ENCODE measurements at regions of chr13 and their contacts with region 1.

Region 1: GRCh38 chr13:113863436-113864272 is at the start of gene GAS6:
- DNase-seq: peak; percentile 77 to 87 (median 79)
- ATAC-seq: peak in 3 of 4 donors; percentile 48 to 71 (median 69)
- H3K4me3 ChIP-seq: peak within 1 kb of the TSS; percentile 76 to 97 (median 86)
- H3K27ac ChIP-seq: peak within 1 kb of the TSS; percentile 88 to 98 (median 94)
- H3K4me1 ChIP-seq: peaks cover 0 to 49% (median 36%) of the 10 kb centered on the region in 12 donors
- H3K27me3 ChIP-seq: peaks cover 0 to 6% (median 0%) of the 10 kb centered on the region in 9 donors
- CTCF ChIP-seq: peak in 7 of 12 donors; percentile 7 to 29 (median 21)
- POLR2A ChIP-seq: peak in 1 of 2 donors; percentile 48
- total RNA-seq, gene GAS6: 125 to 438 (median 183) TPM

Region 2: DNA sequence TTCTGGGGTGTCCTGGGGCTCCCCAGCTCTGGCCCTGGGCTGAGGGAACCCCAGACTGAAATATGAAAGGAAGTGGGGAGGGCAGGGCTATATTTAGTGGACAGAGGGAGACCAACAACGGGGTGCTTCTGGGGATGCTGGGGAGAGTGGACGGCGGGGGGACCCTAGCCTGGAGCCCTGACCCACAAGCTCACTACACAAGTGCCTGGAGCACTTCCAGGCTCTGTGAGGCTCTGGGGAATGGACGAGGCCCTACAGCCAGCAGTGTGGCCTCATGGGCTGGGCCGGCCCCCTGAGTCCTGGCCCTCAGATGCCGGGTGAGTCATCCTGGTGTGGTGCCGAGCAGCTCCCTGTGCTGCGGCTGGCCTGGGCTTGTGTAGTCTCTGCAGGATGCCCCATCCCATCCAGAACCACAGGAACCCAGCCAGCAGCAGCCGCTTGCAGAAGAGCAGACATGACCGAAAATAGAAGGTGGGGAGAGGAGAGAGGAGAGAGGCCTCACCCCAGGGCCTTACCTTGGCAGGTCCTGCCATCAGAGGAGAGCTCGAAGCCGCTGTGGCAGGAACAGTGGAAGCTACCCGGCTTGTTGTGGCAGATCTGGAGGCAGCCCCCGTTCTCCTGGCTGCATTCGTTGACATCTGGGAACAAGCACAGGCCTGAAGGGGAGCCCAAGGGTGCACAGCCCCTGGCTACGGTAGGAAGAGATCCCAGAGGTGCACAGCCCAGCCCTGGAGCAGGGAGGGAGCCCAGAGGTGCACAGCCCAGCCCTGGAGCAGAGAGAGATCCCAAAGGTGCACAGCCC is 25.9 kb before region 1 on chr13:
- intact Hi-C with region 1: loop called in 2 of 10 experiments (anchors 2 kb)
- DNase-seq: peak; percentile 92 to 98 (median 95)
- ATAC-seq: peak; percentile 95 to 97 (median 96)
- H3K4me3 ChIP-seq: peak overlapping the region in 8 of 12 donors; percentile 5 to 43 (median 21)
- H3K27ac ChIP-seq: peak overlapping the region; percentile 8 to 97 (median 86)
- H3K4me1 ChIP-seq: peaks cover 24 to 60% (median 46%) of the 10 kb centered on the region in 12 donors
- H3K27me3 ChIP-seq: no peaks in the 10 kb centered on the region
- CTCF ChIP-seq: no peak
- POLR2A ChIP-seq: no peak

Region 3: GRCh38 chr13:113845723-113846635 is 17.7 kb before region 1 on chr13:
- intact Hi-C with region 1: loop called in 1 of 10 experiments (anchors 2 kb)
- DNase-seq: peak in 2 of 5 donors; percentile 28 to 29
- ATAC-seq: no peak
- H3K4me3 ChIP-seq: no peak overlapping the region
- H3K27ac ChIP-seq: peak overlapping the region in 1 of 12 donors; percentile 49
- H3K4me1 ChIP-seq: peaks cover 3 to 97% (median 61%) of the 10 kb centered on the region in 12 donors
- H3K27me3 ChIP-seq: no peaks in the 10 kb centered on the region
- CTCF ChIP-seq: no peak
- POLR2A ChIP-seq: no peak

Region 4: GRCh38 chr13:113881614-113882266 is 18.1 kb after region 1 on chr13:
- intact Hi-C with region 1: loop called in 1 of 10 experiments (anchors 2 kb)
- DNase-seq: peak in 2 of 5 donors; percentile 48 to 59
- ATAC-seq: peak; percentile 10 to 65 (median 45)
- H3K4me3 ChIP-seq: no peak overlapping the region
- H3K27ac ChIP-seq: peak overlapping the region; percentile 56 to 93 (median 82)
- H3K4me1 ChIP-seq: peaks cover 3 to 60% (median 42%) of the 10 kb centered on the region in 12 donors
- H3K27me3 ChIP-seq: no peaks in the 10 kb centered on the region
- CTCF ChIP-seq: no peak
- POLR2A ChIP-seq: no peak

Region 5: GRCh38 chr13:113947321-113948033 is 83.8 kb after region 1 on chr13:
- intact Hi-C with region 1: no loop called
- DNase-seq: peak in 4 of 5 donors; percentile 54 to 73 (median 64)
- ATAC-seq: peak; percentile 16 to 53 (median 38)
- H3K4me3 ChIP-seq: no peak overlapping the region
- H3K27ac ChIP-seq: no peak overlapping the region
- H3K4me1 ChIP-seq: peaks cover 0 to 20% (median 10%) of the 10 kb centered on the region in 12 donors
- H3K27me3 ChIP-seq: no peaks in the 10 kb centered on the region
- CTCF ChIP-seq: peak; percentile 44 to 75 (median 70)
- POLR2A ChIP-seq: no peak